Naive thymus-derived CD4-positive, alpha-beta T cell (primary cell): ENCODE measurements at regions of chrX and their contacts with region 1.

Region 1: GRCh38 chrX:41116948-41117347 is 31.7 kb downstream of the USP9X start:
- DNase-seq: peak in 6 of 9 donors; percentile 17 to 38 (median 33)
- ATAC-seq: peak; percentile 66
- H3K4me3 ChIP-seq: no peak overlapping the region
- H3K4me3 Mint-ChIP-seq: peak overlapping the region; percentile 18 to 71 (median 66)
- H3K27ac ChIP-seq: peak overlapping the region; percentile 55
- H3K27ac Mint-ChIP-seq: peak overlapping the region; percentile 23 to 82 (median 75)
- H3K4me1 ChIP-seq: peaks cover 29 to 32% of the 10 kb centered on the region in 2 donors
- H3K4me1 Mint-ChIP-seq: peaks cover 24 to 90% (median 67%) of the 10 kb centered on the region in 7 donors
- H3K27me3 ChIP-seq: no peaks in the 10 kb centered on the region
- H3K27me3 Mint-ChIP-seq: no peaks in the 10 kb centered on the region

Region 2: DNA sequence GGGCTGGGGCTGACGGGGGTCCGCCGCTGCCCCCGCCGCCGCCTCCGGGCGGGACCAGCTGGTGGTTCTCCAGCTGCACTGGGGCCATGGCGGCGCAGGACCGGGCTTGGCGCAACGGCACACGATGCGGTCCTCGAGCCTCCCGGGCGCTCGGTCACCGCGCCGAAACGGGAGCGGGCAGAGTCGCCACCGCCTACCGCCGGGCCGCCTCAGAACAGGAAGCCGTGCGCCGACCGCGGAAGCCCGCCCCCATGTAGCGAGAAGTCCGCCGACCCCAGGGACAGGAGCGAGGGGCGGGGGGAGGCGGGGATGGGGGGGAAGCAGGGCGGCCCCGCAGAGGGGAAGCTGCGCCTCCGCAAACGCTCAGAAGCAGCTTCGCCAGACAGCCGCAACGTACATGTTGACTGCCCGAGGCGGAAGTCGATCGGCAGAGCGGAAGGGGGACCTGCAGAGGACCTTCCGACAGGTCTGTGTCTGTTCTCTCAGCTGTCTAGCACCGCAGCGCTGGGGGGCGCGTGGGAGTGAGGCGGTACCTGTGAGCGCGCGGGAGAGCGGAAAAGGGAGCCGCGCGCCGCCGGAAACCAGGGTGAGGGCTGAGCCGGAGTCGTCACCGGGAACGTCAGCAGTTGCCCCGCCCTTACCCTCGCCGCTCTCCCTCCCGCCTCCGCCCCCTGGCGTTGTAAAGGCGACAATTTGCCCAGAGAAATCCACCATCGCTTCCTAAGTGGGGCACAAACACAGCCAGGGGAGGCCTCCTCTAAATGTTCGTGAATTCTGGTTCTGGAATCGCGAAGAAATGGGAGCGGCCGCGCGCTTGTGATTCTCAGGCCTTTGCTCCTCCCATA is 381.4 kb before region 1 on chrX and contains the start of gene MED14:
- CTCF ChIA-PET with region 1: no interaction called
- POLR2A ChIA-PET with region 1: no interaction called
- intact Hi-C with region 1: loop called in 1 of 2 experiments (anchors 5 kb)
- DNase-seq: peak; percentile 74 to 97 (median 96)
- ATAC-seq: peak; percentile 94
- H3K4me3 ChIP-seq: peak within 1 kb of the TSS; percentile 95
- H3K4me3 Mint-ChIP-seq: peak within 1 kb of the TSS; percentile 87 to 99 (median 95)
- H3K27ac ChIP-seq: peak within 1 kb of the TSS; percentile 93
- H3K27ac Mint-ChIP-seq: peak within 1 kb of the TSS; percentile 96 to 100 (median 98)
- H3K4me1 ChIP-seq: peaks cover 6 to 11% of the 10 kb centered on the region in 2 donors
- H3K4me1 Mint-ChIP-seq: peaks cover 9 to 71% (median 48%) of the 10 kb centered on the region in 7 donors
- H3K27me3 ChIP-seq: no peaks in the 10 kb centered on the region
- H3K27me3 Mint-ChIP-seq: no peaks in the 10 kb centered on the region
- total RNA-seq, gene MED14: 37.9 to 49.5 (median 44.3) TPM

Region 3: GRCh38 chrX:40877887-40878286 is 239.1 kb before region 1 on chrX:
- CTCF ChIA-PET with region 1: interaction called, 49 read pairs
- POLR2A ChIA-PET with region 1: interaction called, 4 read pairs
- intact Hi-C with region 1: loop called (anchors 1 kb)
- DNase-seq: peak in 6 of 9 donors; percentile 11 to 46 (median 33)
- ATAC-seq: no peak
- H3K4me3 ChIP-seq: no peak overlapping the region
- H3K4me3 Mint-ChIP-seq: peak overlapping the region in 1 of 10 donors; percentile 9
- H3K27ac ChIP-seq: no peak overlapping the region
- H3K27ac Mint-ChIP-seq: no peak overlapping the region
- H3K4me1 ChIP-seq: no peaks in the 10 kb centered on the region
- H3K4me1 Mint-ChIP-seq: no peaks in the 10 kb centered on the region
- H3K27me3 ChIP-seq: no peaks in the 10 kb centered on the region
- H3K27me3 Mint-ChIP-seq: peaks cover 0 to 4% (median 0%) of the 10 kb centered on the region in 5 donors

Region 4: GRCh38 chrX:40952855-40953254 is 164.1 kb before region 1 on chrX:
- CTCF ChIA-PET with region 1: no interaction called
- POLR2A ChIA-PET with region 1: no interaction called
- intact Hi-C with region 1: loop called in 1 of 2 experiments (anchors 10 kb)
- DNase-seq: peak in 6 of 9 donors; percentile 1 to 30 (median 24)
- ATAC-seq: peak; percentile 55
- H3K4me3 ChIP-seq: no peak overlapping the region
- H3K4me3 Mint-ChIP-seq: peak overlapping the region; percentile 45 to 77 (median 66)
- H3K27ac ChIP-seq: no peak overlapping the region
- H3K27ac Mint-ChIP-seq: peak overlapping the region in 8 of 9 donors; percentile 34 to 59 (median 52)
- H3K4me1 ChIP-seq: peaks cover 0 to 7% of the 10 kb centered on the region in 2 donors
- H3K4me1 Mint-ChIP-seq: peaks cover 2 to 19% (median 12%) of the 10 kb centered on the region in 7 donors
- H3K27me3 ChIP-seq: no peaks in the 10 kb centered on the region
- H3K27me3 Mint-ChIP-seq: no peaks in the 10 kb centered on the region

Region 5: GRCh38 chrX:41064028-41064427 is 52.9 kb before region 1 on chrX:
- CTCF ChIA-PET with region 1: no interaction called
- POLR2A ChIA-PET with region 1: no interaction called
- intact Hi-C with region 1: loop called in 1 of 2 experiments (anchors 10 kb)
- DNase-seq: no peak
- ATAC-seq: no peak
- H3K4me3 ChIP-seq: no peak overlapping the region
- H3K4me3 Mint-ChIP-seq: no peak overlapping the region
- H3K27ac ChIP-seq: no peak overlapping the region
- H3K27ac Mint-ChIP-seq: no peak overlapping the region
- H3K4me1 ChIP-seq: no peaks in the 10 kb centered on the region
- H3K4me1 Mint-ChIP-seq: peaks cover 0 to 6% (median 0%) of the 10 kb centered on the region in 7 donors
- H3K27me3 ChIP-seq: no peaks in the 10 kb centered on the region
- H3K27me3 Mint-ChIP-seq: peaks cover 0 to 5% (median 0%) of the 10 kb centered on the region in 5 donors